SK-N-SH (cell line): ENCODE measurements at regions of chr4 and their contacts with region 1.

Region 1: DNA sequence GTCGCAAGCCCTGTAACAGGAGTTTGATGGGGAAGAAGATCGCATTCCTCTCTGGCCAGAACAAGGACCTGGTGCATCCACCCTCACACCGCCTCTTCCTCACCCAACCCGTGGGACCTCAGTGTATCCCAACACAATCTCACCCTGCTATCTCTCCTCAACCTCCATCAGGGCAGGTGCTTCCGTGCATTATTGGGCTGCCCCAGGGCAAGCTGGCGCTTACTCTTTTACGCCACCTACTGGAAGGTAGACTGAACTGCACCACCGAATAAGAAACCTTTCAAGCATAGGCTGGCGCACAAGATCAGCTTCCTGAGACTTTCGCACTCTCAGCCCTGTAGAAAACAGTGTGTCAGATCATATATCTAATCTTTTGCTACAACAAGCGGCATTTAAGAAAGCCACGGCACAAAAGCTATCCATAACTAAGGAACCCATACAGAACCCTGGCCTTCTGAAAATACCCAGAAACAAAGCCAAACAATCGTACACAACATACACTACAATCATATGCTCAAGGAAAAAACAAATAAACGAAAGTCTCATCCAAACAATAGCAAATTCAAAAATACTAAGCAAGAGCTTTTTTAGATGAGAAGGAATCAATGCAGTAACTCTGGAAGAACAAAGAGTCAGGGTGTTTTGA is 209.3 kb downstream of the UGT8 start:
- DNase-seq: peak; percentile 38
- H3K4me3 ChIP-seq: no peak overlapping the region; a peak in 1 of 4 replicates
- H3K27ac ChIP-seq: no peak overlapping the region
- H3K4me1 ChIP-seq: no peaks in the 10 kb centered on the region; a peak in 1 of 4 replicates
- H3K27me3 ChIP-seq: no peaks in the 10 kb centered on the region
- CTCF ChIP-seq: peak; percentile 85
- EP300 ChIP-seq: no peak
- RAD21 ChIP-seq: peak; percentile 45

Region 2: DNA sequence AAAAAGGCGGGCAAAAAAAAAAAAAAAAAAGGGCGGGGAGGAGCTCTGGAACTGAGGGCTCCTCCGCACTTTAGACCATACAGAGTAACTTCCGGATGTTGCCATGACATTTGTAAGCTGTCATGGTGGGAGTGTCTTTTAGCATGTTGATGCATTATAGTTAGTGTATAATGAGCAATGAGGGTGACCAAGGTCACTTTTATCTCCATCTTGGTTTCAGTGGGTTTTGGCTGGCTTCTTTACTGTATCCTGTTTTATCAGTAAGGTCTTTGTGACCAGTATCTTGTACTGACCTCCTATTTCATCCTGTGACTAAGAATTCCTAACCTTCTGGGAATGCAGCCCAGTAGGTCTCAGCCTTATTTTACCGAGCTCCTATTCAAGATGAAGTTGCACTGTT is 15.9 kb before region 1 on chr4:
- CTCF ChIA-PET with region 1: interaction called, 12 read pairs
- POLR2A ChIA-PET with region 1: no interaction called
- DNase-seq: no peak
- H3K4me3 ChIP-seq: no peak overlapping the region
- H3K27ac ChIP-seq: no peak overlapping the region
- H3K4me1 ChIP-seq: no peaks in the 10 kb centered on the region
- H3K27me3 ChIP-seq: no peaks in the 10 kb centered on the region; the same call in 1 of the 2 replicates
- CTCF ChIP-seq: no peak
- EP300 ChIP-seq: no peak
- RAD21 ChIP-seq: no peak